ENCODE measurements at regions of chr6 and their contacts with region 1.

Region 1: GRCh38 chr6:129730477-129731165 is 20.6 kb upstream of the ARHGAP18 start:
- DNase-seq: peak; percentile 44
- ATAC-seq: peak; percentile 65
- H3K4me3 Mint-ChIP-seq: no peak overlapping the region
- H3K27ac Mint-ChIP-seq: peak overlapping the region; percentile 40
- H3K4me1 Mint-ChIP-seq: peaks cover 15% of the 10 kb centered on the region
- H3K27me3 Mint-ChIP-seq: no peaks in the 10 kb centered on the region
- CTCF ChIP-seq: peak; percentile 83

Region 2: GRCh38 chr6:129621247-129621646 is 109.4 kb before region 1 on chr6:
- CTCF ChIA-PET with region 1: interaction called, 20 read pairs
- POLR2A ChIA-PET with region 1: no interaction called
- intact Hi-C with region 1: no loop called
- DNase-seq: peak; percentile 51
- ATAC-seq: peak; percentile 75
- H3K4me3 Mint-ChIP-seq: no peak overlapping the region
- H3K27ac Mint-ChIP-seq: no peak overlapping the region
- H3K4me1 Mint-ChIP-seq: no peaks in the 10 kb centered on the region
- H3K27me3 Mint-ChIP-seq: no peaks in the 10 kb centered on the region
- CTCF ChIP-seq: peak; percentile 47

Region 3: GRCh38 chr6:129672881-129673643 is 57.6 kb before region 1 on chr6:
- CTCF ChIA-PET with region 1: interaction called, 35 read pairs
- POLR2A ChIA-PET with region 1: interaction called, 3 read pairs
- intact Hi-C with region 1: loop called (anchors 5 kb)
- DNase-seq: peak; percentile 49
- ATAC-seq: peak; percentile 63
- H3K4me3 Mint-ChIP-seq: peak overlapping the region; percentile 59
- H3K27ac Mint-ChIP-seq: peak overlapping the region; percentile 94
- H3K4me1 Mint-ChIP-seq: peaks cover 47% of the 10 kb centered on the region
- H3K27me3 Mint-ChIP-seq: no peaks in the 10 kb centered on the region
- CTCF ChIP-seq: no peak

Region 4: DNA sequence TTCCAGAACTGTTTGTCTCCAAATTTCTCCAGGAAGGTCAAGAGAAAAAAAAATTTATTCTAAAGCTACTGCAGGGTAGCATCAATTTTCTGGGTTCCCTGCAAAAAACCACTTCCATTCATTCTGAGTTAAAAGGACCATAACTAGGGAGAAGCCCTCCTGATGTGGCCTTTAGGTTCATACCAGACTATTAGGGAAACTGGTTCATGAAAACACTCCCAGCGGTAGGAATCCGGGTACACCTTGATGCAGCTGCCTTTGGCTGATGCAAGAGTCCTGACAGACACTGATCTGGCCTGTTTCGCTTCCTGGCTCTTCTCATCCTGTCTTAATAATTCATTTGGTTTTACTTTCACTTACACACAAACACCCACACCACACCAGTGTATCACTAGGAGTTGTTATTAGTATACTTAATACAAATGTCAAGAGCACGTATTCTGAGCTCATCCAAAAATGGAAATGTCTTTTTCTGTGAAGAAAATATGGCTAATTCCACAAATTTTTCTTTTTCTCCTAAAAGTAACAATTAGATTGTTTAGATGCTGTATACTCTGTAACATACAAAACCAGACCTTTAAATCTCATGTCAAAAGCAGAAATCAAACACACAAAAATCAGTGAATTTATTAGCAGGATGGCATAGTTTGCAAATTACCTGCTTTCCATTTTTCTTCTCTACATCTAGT is 17.7 kb after region 1 on chr6:
- CTCF ChIA-PET with region 1: interaction called, 18 read pairs
- POLR2A ChIA-PET with region 1: no interaction called
- intact Hi-C with region 1: no loop called
- DNase-seq: peak; percentile 78
- ATAC-seq: peak; percentile 90
- H3K4me3 Mint-ChIP-seq: peak overlapping the region; percentile 75
- H3K27ac Mint-ChIP-seq: peak overlapping the region; percentile 94
- H3K4me1 Mint-ChIP-seq: peaks cover 69% of the 10 kb centered on the region
- H3K27me3 Mint-ChIP-seq: no peaks in the 10 kb centered on the region
- CTCF ChIP-seq: no peak

Measured in activated CD8-positive, alpha-beta T cell treated with anti-CD3 and anti-CD28 coated beads for 36 hours (primary cell).